Caco-2 (cell line): ENCODE measurements at regions of chr1 and their contacts with region 1.

Region 1: DNA sequence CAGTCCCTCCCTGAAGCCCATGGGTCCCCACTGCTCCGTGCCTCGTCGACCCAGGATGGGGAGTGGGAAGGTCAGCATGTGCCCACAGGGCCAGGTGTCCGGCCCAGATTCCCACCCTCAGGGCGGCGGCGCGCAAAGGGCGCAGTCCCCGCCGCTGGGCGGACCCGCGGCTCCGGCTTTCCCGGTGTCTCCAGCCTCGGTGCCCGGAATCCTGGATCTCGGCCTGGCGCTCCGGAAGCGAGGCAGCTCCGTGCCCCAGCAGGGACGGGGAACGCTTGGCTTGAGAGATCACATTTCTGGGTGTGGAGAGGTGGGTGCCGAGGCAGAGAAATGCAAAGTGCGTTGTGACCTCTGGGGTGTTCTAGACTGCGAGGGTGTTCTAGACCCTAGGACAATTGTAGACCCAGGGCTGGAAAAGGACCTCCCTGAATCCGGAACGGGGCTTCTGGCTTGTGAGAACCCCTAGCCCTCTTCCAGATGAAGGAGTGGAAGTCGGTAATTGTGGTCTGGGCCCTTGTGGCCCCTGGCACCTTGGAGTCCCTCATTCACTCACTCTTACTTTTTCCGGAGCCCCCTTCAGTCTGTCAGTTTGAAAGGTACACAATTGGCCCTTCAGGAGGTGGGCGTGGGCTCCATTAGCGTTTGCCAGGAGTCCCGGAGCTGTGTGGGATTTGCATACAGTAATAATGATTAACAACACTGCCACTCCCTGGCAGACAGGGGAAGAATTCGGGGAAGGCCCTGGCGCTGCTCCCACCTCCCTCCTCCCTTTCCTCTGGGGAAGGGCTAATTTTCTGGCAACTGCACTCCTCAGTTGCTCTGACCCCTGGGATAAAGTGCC is 1.6 kb upstream of the KCND3 start:
- DNase-seq: peak; percentile 55 to 57
- H3K4me3 ChIP-seq: peak overlapping the region; percentile 58
- H3K4me3 Mint-ChIP-seq: peak overlapping the region; percentile 82
- H3K27ac Mint-ChIP-seq: no peak overlapping the region
- H3K4me1 ChIP-seq: peaks cover 22% of the 10 kb centered on the region
- H3K4me1 Mint-ChIP-seq: no peaks in the 10 kb centered on the region
- H3K27me3 ChIP-seq: no peaks in the 10 kb centered on the region
- H3K27me3 Mint-ChIP-seq: no peaks in the 10 kb centered on the region
- CTCF ChIP-seq: peak in 1 of 2 experiments; percentile 15

Region 2: DNA sequence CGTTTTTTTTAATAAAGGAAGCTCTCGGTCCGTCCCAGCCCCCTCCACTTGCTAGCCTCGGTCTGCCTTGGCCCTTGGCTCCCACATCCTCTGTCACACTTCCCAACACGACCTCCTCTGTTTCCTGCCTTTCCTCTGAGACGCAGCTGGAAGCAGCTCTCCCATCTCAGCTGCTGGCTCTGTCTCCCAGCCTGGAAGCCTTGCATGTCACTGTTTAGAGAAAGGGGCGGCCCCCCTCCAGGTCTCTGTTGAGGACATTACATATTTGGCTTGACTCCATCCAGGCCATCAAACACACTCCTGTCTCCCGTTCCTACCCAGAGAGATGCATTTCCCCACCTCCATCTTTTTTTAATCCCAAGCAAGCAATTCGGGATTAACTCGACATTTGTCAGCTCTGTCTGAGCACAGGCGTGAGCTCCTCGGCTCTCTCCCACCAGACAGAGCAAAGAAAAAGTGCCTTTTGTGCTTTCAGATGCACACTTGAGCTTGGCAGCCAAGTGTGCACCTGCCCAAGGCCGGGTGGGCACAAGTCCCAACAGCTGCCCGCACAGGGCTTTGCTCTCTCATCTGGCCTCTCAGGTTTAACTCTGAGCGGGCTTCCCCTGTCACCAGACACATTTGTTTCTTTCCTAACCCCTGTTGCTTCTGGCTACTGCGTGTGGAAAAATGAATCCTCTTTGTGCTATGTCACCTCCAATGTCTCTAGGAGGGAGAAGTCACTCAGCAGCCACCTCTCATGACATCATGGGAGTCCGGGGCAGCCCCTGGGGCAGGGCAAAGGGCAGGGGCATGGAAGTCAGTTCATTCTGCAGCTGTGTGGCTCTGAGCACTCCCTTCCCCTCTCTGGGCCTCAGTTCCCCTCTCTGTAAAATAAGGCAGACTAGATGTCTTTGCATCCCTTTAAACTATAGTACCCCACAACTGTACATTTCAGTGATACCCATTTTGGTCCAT is 109.9 kb before region 1 on chr1:
- CTCF ChIA-PET with region 1: no interaction called
- POLR2A ChIA-PET with region 1: no interaction called
- intact Hi-C with region 1: loop called (anchors 5 kb)
- DNase-seq: no peak
- H3K4me3 ChIP-seq: no peak overlapping the region
- H3K4me3 Mint-ChIP-seq: no peak overlapping the region
- H3K27ac Mint-ChIP-seq: no peak overlapping the region
- H3K4me1 ChIP-seq: peaks cover 19% of the 10 kb centered on the region
- H3K4me1 Mint-ChIP-seq: no peaks in the 10 kb centered on the region
- H3K27me3 ChIP-seq: no peaks in the 10 kb centered on the region
- H3K27me3 Mint-ChIP-seq: no peaks in the 10 kb centered on the region
- CTCF ChIP-seq: no peak

Region 3: DNA sequence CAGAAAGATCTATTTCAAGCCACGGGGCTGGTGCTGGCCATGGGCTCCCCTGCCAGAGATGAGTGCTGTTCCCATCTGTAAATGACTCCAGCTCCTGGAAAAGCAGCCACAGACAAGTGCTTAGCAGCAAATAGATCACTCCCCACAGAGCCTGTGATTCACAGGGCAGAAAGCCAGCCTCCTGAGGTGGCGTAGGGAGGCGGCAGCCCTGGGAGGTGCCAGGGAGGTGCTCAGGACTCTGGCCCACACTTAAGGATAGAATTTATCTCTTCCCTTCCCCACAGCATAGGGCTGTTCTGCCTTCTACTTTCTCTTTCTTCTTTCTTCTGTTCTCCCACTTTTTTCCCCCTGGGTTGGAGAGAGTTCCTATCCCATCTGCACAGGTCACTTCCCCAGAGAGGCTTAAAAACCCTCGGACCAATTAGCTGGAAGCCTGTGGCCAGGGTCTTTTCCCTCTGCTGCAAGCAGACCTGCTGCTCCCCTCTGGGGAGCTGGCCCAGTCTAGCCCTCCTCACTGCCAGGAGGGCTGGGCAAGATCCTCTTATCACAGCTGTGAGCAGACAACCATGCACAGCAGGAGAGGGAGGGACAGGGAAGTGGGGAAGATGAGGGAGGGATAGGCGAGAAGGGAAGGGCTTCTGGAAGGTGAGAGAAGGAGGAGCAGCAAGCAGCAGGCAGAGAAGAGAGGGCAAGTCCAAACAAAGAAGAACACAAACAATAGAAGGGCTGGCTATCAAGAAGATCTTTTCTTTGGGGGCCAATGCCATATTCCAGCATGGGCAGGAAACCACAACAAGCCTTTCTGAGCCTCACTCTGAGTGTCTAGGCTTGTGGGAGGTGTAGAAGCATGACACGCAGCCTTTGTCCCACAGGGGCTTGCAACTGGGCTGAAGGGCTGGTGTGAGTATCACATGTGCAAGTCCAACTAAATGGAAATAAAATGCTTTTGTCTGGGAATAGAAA is 42.6 kb before region 1 on chr1:
- CTCF ChIA-PET with region 1: no interaction called
- POLR2A ChIA-PET with region 1: no interaction called
- intact Hi-C with region 1: loop called (anchors 10 kb)
- DNase-seq: no peak
- H3K4me3 ChIP-seq: no peak overlapping the region
- H3K4me3 Mint-ChIP-seq: no peak overlapping the region
- H3K27ac Mint-ChIP-seq: no peak overlapping the region
- H3K4me1 ChIP-seq: no peaks in the 10 kb centered on the region
- H3K4me1 Mint-ChIP-seq: peaks cover 7% of the 10 kb centered on the region
- H3K27me3 ChIP-seq: no peaks in the 10 kb centered on the region
- H3K27me3 Mint-ChIP-seq: no peaks in the 10 kb centered on the region
- CTCF ChIP-seq: no peak

Region 4: DNA sequence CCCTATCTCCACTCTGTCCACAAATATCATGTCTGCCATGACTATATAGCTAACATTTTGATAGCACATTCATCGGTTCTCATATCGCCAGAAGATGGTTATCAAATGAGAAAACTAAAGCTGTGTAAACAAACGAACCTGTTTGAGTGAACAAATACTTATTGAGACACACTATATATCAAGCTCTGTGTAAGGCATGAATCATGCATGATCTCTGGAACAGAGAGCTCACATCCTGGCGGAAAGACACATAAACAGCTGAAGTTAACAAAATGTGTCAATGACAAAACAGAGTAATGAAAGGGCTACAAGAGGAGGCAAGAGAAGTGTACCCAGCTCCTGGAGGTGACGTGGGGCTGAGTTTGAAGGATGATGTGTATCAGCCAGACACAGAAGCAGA is 14.7 kb before region 1 on chr1:
- CTCF ChIA-PET with region 1: no interaction called
- POLR2A ChIA-PET with region 1: no interaction called
- intact Hi-C with region 1: loop called (anchors 1 kb)
- DNase-seq: no peak
- H3K4me3 ChIP-seq: no peak overlapping the region
- H3K4me3 Mint-ChIP-seq: peak overlapping the region; percentile 39
- H3K27ac Mint-ChIP-seq: no peak overlapping the region
- H3K4me1 ChIP-seq: peaks cover 41% of the 10 kb centered on the region
- H3K4me1 Mint-ChIP-seq: peaks cover 14% of the 10 kb centered on the region
- H3K27me3 ChIP-seq: no peaks in the 10 kb centered on the region
- H3K27me3 Mint-ChIP-seq: no peaks in the 10 kb centered on the region
- CTCF ChIP-seq: no peak

Region 5: GRCh38 chr1:113219377-113219776 is 1228.3 kb after region 1 on chr1:
- CTCF ChIA-PET with region 1: no interaction called
- POLR2A ChIA-PET with region 1: no interaction called
- intact Hi-C with region 1: no loop called
- DNase-seq: no peak
- H3K4me3 ChIP-seq: no peak overlapping the region
- H3K4me3 Mint-ChIP-seq: no peak overlapping the region
- H3K27ac Mint-ChIP-seq: peak overlapping the region; percentile 55
- H3K4me1 ChIP-seq: peaks cover 39% of the 10 kb centered on the region
- H3K4me1 Mint-ChIP-seq: peaks cover 34% of the 10 kb centered on the region
- H3K27me3 ChIP-seq: no peaks in the 10 kb centered on the region
- H3K27me3 Mint-ChIP-seq: no peaks in the 10 kb centered on the region
- CTCF ChIP-seq: no peak